ENCODE measurements at regions of chr1 and their contacts with region 1.

Region 1: DNA sequence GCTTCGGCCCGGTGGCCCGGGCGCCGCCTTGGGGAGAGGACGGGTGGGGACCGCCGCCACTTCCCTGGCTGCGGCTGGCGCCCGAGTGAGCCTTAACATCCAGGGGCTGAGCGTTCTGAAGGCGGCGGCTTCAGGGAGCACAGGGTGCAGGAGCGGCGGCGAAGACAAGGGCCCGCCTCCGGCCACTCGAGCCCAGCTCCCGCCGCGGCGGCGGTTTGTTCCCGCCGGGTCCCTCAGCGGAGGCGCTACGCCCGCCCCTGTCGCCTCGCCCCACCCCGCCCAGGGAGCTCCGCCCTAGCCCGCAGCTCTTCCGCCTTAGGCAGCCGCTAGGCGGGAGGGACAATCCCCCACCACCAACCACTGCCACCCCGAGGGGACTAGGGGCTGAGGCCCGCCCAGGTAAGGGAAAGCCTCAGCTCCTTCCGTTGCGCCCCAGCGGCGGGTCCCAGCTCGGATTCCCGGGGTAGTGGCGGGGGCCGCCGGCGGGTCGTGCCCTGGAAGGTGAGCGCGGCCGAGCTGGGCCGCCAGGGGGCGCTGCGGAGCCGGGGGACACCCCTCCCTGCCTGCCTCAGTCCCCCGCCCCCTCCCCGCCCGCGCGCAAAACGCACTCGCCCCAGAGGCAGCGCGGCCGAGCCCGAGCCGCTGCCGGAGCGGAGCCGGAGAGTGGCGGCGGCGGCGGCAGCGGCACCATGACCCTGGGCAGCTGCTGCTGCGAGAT is at the start of gene FOXD2:
- DNase-seq: peak; percentile 96
- H3K4me3 ChIP-seq: peak within 1 kb of the TSS; percentile 49 to 87
- H3K27ac ChIP-seq: no peak within 1 kb of the TSS
- H3K4me1 ChIP-seq: peaks cover 0 to 10% of the 10 kb centered on the region in 2 experiments; a peak in 1 of 4 replicates
- H3K27me3 ChIP-seq: peaks cover 82% of the 10 kb centered on the region
- CTCF ChIP-seq: peak; percentile 84
- EP300 ChIP-seq: no peak
- RAD21 ChIP-seq: peak; percentile 19; the same call in 1 of the 2 replicates
- polyA plus RNA-seq, gene FOXD2: not detected in 2 replicates

Region 2: DNA sequence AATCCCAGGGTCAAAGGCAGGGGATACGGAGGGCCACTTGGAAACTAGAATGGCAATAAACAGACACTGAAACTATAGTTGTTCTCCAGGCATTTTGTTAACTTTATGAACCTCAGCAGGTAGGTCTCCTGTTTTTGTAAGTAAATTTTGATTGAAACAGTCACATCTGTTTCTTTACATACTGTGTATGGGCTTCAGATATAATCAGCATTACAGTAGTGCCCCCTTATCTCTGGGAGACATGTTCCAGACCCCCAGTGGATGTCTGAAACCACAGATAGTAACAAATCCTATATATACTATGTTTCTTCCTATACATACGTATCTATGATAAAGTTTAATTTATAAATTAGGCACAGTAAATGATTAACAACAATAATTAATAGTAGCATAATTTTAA is 135.1 kb before region 1 on chr1:
- CTCF ChIA-PET with region 1: no interaction called
- POLR2A ChIA-PET with region 1: no interaction called
- DNase-seq: peak; percentile 24
- H3K4me3 ChIP-seq: no peak overlapping the region
- H3K27ac ChIP-seq: no peak overlapping the region
- H3K4me1 ChIP-seq: no peaks in the 10 kb centered on the region; a peak in 1 of 4 replicates
- H3K27me3 ChIP-seq: no peaks in the 10 kb centered on the region
- CTCF ChIP-seq: no peak
- EP300 ChIP-seq: peak in 1 of 2 experiments; percentile 43; a peak in 1 of 4 replicates
- RAD21 ChIP-seq: no peak

Region 3: DNA sequence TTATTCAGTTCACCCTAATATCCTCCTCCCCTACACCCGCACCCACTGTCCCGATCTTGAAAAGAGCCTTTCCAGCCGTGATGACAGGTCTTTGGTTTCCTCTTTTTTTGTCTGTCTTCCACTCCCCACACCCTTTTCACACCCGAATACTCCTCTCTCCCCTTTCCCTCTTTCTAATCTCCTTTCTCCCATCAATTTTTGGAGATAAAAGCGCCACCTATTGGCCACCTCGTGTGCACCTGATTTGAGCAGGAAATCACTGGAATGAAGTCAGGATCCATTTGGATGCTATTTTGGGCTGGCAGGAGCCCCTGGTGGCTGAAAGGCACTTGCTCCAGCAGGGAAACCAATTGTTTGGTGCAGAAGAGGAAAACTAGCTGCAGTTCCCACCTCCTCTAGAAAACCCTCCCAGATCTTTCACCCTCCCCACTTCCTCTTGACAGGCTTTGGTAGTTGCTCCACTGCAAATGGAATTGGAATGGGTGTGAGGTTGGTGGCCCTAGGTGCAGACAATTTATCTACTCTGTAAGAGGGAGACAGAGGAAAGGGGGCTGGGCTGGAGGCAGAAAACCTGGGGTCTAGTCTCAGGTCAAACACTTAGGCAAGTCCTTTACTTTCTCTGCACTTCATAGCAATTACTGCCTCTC is 13.1 kb before region 1 on chr1:
- CTCF ChIA-PET with region 1: interaction called, 183 read pairs
- POLR2A ChIA-PET with region 1: no interaction called
- DNase-seq: peak; percentile 65
- H3K4me3 ChIP-seq: no peak overlapping the region
- H3K27ac ChIP-seq: no peak overlapping the region
- H3K4me1 ChIP-seq: no peaks in the 10 kb centered on the region
- H3K27me3 ChIP-seq: peaks cover 18% of the 10 kb centered on the region; the same call in 1 of the 2 replicates
- CTCF ChIP-seq: peak; percentile 81
- EP300 ChIP-seq: no peak
- RAD21 ChIP-seq: peak; percentile 61

Region 4: GRCh38 chr1:47471163-47471562 is 33.6 kb after region 1 on chr1:
- CTCF ChIA-PET with region 1: interaction called, 21 read pairs
- POLR2A ChIA-PET with region 1: no interaction called
- DNase-seq: no peak
- H3K4me3 ChIP-seq: no peak overlapping the region
- H3K27ac ChIP-seq: no peak overlapping the region
- H3K4me1 ChIP-seq: peaks cover 0 to 5% of the 10 kb centered on the region in 2 experiments; a peak in 1 of 4 replicates
- H3K27me3 ChIP-seq: no peaks in the 10 kb centered on the region; the same call in 1 of the 2 replicates
- CTCF ChIP-seq: no peak
- EP300 ChIP-seq: no peak
- RAD21 ChIP-seq: no peak

Region 5: DNA sequence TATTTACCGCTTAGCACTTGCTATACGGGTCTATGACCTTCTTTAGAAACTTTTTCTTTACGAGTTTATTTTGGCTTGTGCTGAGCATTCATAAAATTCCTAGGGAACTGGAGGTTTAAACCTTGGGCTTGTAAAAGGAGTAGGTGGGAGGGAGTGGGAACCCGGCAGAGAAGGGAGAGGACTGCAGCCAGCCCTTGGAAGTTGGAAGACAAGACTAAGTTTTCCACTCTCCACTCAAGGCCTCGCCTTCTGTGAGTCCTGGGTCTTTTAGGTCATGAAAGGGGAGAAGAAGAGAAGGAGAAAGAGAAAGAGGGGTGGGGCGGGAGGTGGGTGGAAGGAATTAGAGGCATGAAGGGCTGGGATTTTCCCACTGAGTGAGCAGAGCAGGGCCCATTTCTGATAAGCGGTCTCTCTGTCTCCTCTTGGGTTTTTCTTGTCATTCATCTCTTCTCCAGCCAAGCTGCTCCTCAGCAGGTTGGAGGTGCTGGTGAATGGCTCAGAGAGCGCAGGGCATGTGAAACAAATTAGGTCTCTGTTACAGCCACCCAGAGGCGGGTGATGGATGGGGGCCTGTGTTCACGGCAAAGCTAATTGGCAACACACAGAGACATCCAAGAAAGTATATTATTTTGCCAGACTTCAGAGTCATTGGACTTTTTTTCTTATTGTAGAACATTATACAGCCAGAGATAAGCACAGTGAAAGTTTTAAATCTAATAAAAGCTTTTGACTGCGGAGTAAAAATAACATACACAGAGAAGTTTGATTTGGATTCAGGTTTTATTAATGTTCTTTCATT is 247.6 kb after region 1 on chr1:
- CTCF ChIA-PET with region 1: interaction called, 14 read pairs
- POLR2A ChIA-PET with region 1: no interaction called
- DNase-seq: peak; percentile 74
- H3K4me3 ChIP-seq: no peak overlapping the region
- H3K27ac ChIP-seq: peak overlapping the region in 1 of 2 experiments; percentile 32; a peak in 1 of 4 replicates
- H3K4me1 ChIP-seq: peaks cover 0 to 19% of the 10 kb centered on the region in 2 experiments; a peak in 2 of 4 replicates
- H3K27me3 ChIP-seq: peaks cover 5% of the 10 kb centered on the region; the same call in 1 of the 2 replicates
- CTCF ChIP-seq: no peak
- EP300 ChIP-seq: peak in 1 of 2 experiments; percentile 39; a peak in 1 of 4 replicates
- RAD21 ChIP-seq: no peak